Activated B cell treated with CpG ODN at 0.5 μM for 24 hours (primary cell): ENCODE measurements at regions of chr2 and their contacts with region 1.

Region 1: DNA sequence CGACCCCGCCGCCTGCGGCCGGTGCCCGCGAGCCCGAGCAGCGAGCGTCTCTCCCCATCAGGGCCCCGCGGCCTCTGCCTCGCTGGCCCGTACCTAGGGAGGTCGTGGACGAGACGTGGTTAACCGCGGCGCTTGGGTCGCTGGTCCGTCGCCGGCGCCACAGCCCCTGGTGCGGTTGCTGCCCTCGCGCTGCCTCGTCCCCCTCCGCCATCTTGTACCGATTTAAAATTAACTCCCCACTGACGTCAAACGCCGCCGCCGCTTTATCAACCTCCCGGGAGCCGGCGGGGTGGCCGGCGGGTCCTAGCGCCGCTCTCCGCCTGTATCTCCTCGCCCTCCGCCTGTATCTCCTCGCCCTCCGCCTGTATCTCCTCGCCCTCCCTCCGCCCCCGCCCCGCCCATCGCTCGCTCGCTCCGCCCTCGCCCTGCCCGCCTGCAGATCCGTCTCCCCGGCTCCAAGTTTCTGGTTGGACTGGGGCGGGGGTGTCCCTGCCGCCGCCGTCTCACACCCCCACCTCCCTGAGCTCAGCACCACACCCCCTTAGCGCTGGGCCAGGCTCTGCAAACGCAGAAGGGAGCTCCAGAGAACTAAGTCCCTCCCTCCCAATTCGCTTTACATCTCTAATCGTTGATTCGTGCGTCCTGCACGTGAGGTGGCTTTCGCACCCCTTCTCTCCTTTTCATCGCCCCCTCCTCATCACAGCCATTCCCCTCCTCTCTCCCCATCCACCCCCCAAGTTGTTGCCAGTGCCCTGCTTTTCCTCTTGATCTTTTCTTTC is at the start of gene ATL2:
- DNase-seq: peak; percentile 87
- ATAC-seq: peak; percentile 87
- H3K4me3 Mint-ChIP-seq: peak within 1 kb of the TSS; percentile 91
- H3K27ac Mint-ChIP-seq: peak within 1 kb of the TSS; percentile 86
- H3K4me1 Mint-ChIP-seq: peaks cover 43% of the 10 kb centered on the region
- H3K27me3 Mint-ChIP-seq: peaks cover 4% of the 10 kb centered on the region
- CTCF ChIP-seq: no peak
- total RNA-seq, gene ATL2: 40.0 and 43.2 TPM in 2 replicates

Region 2: DNA sequence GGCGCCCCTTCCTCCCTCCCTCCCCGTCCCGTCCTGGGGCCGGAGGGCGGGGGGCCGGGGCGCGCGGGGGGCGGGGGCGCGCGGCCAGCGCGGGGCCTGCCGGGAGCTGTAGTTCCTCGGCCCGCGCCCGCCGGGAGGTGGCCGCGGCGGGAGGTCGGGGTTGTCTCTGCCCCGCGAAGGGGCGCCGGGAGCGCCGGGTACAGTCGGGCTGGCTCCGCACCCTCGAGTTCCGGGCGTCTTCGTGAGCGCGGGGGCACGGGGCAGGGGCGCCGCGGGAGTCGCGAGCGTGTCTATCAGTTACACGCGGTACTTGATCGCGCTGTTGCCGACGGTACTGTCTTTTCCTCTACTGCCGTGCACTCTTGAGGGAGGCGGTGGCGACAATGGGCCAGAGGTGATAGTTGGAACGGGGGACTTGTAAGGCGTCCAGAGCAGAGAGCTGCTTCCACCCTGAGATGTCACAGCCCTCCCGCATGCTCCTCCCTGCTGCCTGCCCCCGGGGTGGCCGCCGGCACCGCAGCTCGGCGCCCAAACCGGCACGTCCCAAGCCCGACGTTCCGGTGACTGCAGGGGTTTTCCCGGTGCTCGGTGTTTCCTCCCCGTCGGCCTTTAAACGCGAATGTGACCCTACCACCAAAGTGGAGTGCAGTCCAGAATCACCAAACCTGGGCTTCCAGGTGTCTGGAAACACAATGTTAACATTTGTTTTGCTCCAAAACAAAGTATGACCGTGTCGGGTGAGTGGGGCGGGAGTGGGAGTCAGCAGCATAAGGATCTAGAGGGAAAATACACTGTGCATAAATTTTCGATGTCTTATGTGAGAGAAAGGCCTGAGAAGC is 1052.2 kb before region 1 on chr2 and contains the start of gene PRKD3:
- CTCF ChIA-PET with region 1: no interaction called
- POLR2A ChIA-PET with region 1: no interaction called
- intact Hi-C with region 1: loop called (anchors 5 kb)
- DNase-seq: peak; percentile 73
- ATAC-seq: peak; percentile 83
- H3K4me3 Mint-ChIP-seq: peak within 1 kb of the TSS; percentile 97
- H3K27ac Mint-ChIP-seq: peak within 1 kb of the TSS; percentile 96
- H3K4me1 Mint-ChIP-seq: peaks cover 38% of the 10 kb centered on the region
- H3K27me3 Mint-ChIP-seq: no peaks in the 10 kb centered on the region
- CTCF ChIP-seq: no peak
- total RNA-seq, gene PRKD3: 73.0 and 82.5 TPM in 2 replicates

Region 3: DNA sequence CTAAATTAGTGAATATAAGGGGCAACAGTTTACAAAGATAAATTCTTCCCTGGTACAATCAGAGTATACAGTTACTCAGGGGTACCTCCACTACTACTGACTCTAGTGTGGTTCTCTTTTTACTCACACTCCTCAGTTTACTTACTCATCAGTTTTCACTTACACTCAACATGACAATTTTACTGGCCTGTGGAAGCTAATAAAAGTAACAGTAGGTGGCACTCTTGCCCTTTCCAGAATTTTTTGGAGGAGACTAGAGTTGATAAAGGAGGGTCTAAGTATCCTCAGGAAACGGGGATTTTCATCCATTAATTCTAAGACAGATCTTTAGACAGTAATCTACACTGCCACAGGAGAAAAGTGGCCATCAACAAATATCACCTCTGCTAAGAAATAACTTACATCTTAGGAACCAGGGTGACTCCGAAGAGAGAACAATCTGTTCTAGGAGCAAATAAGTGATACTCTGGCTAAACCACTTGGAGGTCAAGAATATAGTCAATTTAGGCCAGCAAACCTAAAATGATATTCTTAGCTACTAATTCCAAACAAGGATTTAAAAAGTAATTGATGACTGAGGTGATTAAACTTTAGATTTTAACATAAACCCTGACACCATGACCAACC is 61.4 kb before region 1 on chr2:
- CTCF ChIA-PET with region 1: interaction called, 8 read pairs
- POLR2A ChIA-PET with region 1: interaction called, 3 read pairs
- intact Hi-C with region 1: loop called (anchors 2 kb)
- DNase-seq: no peak
- ATAC-seq: peak; percentile 28
- H3K4me3 Mint-ChIP-seq: no peak overlapping the region
- H3K27ac Mint-ChIP-seq: no peak overlapping the region
- H3K4me1 Mint-ChIP-seq: no peaks in the 10 kb centered on the region
- H3K27me3 Mint-ChIP-seq: no peaks in the 10 kb centered on the region
- CTCF ChIP-seq: peak; percentile 40

Region 4: GRCh38 chr2:38387887-38388286 is 10.6 kb after region 1 on chr2:
- CTCF ChIA-PET with region 1: no interaction called
- POLR2A ChIA-PET with region 1: no interaction called
- intact Hi-C with region 1: no loop called
- DNase-seq: no peak
- ATAC-seq: no peak
- H3K4me3 Mint-ChIP-seq: no peak overlapping the region
- H3K27ac Mint-ChIP-seq: no peak overlapping the region
- H3K4me1 Mint-ChIP-seq: peaks cover 10% of the 10 kb centered on the region
- H3K27me3 Mint-ChIP-seq: peaks cover 13% of the 10 kb centered on the region
- CTCF ChIP-seq: no peak

Region 5: DNA sequence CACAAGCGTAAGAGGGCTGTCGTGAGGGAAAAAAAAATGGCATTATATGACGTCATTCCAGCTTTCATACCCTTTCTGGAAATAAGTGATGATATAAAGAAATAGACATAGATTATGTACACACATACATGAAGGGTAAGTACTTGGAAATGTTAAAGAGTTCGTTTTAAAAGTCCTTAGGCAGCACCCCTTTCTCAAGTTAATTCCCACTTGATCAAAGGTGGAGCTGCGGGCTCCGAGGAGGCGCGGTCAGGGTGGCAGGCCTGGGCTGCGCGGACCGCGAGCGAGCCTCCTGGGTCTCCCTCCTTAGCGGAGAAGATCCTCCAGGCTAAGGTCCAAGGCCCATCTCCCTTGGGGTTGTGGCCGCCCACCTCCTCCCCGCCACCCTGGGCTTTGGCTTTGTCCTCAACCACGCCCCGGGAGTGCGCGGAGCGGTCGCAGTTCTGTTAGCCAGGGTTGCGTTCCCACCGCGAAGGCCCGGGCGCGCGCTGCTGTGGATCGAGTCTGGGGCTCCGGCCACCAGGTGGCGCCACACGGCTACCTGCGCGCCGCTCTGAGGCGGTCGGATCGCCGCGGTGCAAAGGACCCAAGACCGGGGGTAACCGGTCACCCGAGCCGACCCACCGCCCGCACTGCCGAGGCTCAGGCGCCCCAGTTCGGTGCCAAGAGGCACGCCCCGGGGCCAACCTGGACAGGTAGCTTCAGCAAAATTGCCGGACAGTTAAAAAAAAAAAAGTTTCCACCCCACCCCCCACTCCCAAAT is 158.7 kb after region 1 on chr2:
- CTCF ChIA-PET with region 1: interaction called, 3 read pairs
- POLR2A ChIA-PET with region 1: interaction called, 6 read pairs
- intact Hi-C with region 1: loop called (anchors 1 kb)
- DNase-seq: peak; percentile 84
- ATAC-seq: peak; percentile 47
- H3K4me3 Mint-ChIP-seq: peak overlapping the region; percentile 75
- H3K27ac Mint-ChIP-seq: no peak overlapping the region
- H3K4me1 Mint-ChIP-seq: peaks cover 39% of the 10 kb centered on the region
- H3K27me3 Mint-ChIP-seq: peaks cover 11% of the 10 kb centered on the region
- CTCF ChIP-seq: peak; percentile 92

Region 6: GRCh38 chr2:38778687-38779082 is 401.4 kb after region 1 on chr2:
- CTCF ChIA-PET with region 1: no interaction called
- POLR2A ChIA-PET with region 1: no interaction called
- intact Hi-C with region 1: loop called (anchors 1 kb)
- DNase-seq: no peak
- ATAC-seq: no peak
- H3K4me3 Mint-ChIP-seq: peak overlapping the region; percentile 91
- H3K27ac Mint-ChIP-seq: peak overlapping the region; percentile 89
- H3K4me1 Mint-ChIP-seq: peaks cover 12% of the 10 kb centered on the region
- H3K27me3 Mint-ChIP-seq: peaks cover 10% of the 10 kb centered on the region
- CTCF ChIP-seq: no peak